H1 (cell line): ENCODE measurements at regions of chr17 and their contacts with region 1.

Region 1: DNA sequence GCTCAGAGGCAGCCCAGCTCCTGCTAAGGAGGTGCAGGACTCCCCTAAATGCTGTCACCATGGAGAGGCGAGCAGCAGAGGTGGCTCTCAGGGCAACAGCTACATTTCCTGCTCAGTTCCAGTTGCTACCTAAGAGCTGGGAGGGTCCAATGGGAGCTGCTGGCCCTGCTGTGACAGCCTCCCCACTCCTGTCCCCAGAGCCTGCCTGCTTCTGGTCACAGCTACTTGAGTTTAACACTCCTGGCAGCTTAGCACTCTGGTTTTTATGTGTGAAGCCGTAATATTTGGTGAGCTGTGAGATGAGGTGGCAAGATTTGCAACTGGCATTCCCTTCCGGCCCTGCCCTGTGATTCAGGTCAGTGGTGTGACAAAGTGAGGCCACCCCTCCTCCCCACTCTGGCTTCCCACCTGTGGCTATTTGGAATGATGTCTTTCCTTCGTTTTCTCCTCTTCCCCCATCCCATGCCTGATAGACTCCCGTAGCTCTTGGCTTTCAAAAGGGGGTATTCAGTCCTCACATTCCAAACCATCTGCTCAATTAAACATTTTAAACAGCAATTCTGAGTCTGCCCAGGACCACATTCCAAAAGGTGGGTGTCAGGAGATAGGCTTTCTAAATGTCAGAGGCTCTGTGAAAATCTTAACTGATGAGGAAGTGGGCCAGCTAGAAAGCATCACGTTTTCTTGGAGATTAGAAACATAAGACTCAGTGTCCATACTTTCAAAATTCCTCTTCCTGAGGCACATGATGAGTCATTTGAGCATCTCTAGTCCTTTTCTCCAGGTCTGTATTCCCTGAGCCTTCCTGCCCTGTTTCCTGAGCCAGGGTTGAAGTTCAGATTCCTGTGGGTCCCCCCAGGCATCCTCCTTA is 42.6 kb upstream of the SKAP1 start:
- DNase-seq: no peak
- H3K4me3 ChIP-seq: no peak overlapping the region
- H3K27ac ChIP-seq: no peak overlapping the region
- H3K4me1 ChIP-seq: peaks cover 4 to 14% (median 12%) of the 10 kb centered on the region in 4 experiments; a peak in 6 of 7 replicates
- H3K27me3 ChIP-seq: 0 out of 7 replicates have a peak, but pooled peaks cover 0 to 2% (median 0%) of the 10 kb centered on the region in 4 experiments
- CTCF ChIP-seq: no peak
- EP300 ChIP-seq: no peak
- POLR2A ChIP-seq: no peak
- RAD21 ChIP-seq: no peak

Region 2: GRCh38 chr17:48457080-48457836 is 15.4 kb before region 1 on chr17:
- CTCF ChIA-PET with region 1: interaction called, 17 read pairs
- POLR2A ChIA-PET with region 1: no interaction called
- DNase-seq: peak in 1 of 2 experiments; percentile 85
- H3K4me3 ChIP-seq: peak overlapping the region in 3 of 4 experiments; percentile 31 to 52 (median 51); a peak in 6 of 8 replicates
- H3K27ac ChIP-seq: no peak overlapping the region
- H3K4me1 ChIP-seq: peaks cover 0 to 12% (median 4%) of the 10 kb centered on the region in 4 experiments; a peak in 5 of 7 replicates
- H3K27me3 ChIP-seq: peaks cover 4 to 12% (median 9%) of the 10 kb centered on the region in 4 experiments
- CTCF ChIP-seq: peak; percentile 85 to 97 (median 96)
- EP300 ChIP-seq: no peak
- POLR2A ChIP-seq: no peak
- RAD21 ChIP-seq: peak; percentile 52 to 75

Region 3: GRCh38 chr17:48483471-48484131 is 11.0 kb after region 1 on chr17:
- CTCF ChIA-PET with region 1: interaction called, 11 read pairs
- POLR2A ChIA-PET with region 1: no interaction called
- DNase-seq: no peak
- H3K4me3 ChIP-seq: no peak overlapping the region
- H3K27ac ChIP-seq: no peak overlapping the region
- H3K4me1 ChIP-seq: peaks cover 0 to 2% (median 0%) of the 10 kb centered on the region in 4 experiments; a peak in 1 of 7 replicates
- H3K27me3 ChIP-seq: peaks cover 0 to 5% (median 2%) of the 10 kb centered on the region in 4 experiments; a peak in 3 of 7 replicates
- CTCF ChIP-seq: no peak
- EP300 ChIP-seq: no peak
- POLR2A ChIP-seq: no peak
- RAD21 ChIP-seq: no peak

Region 4: DNA sequence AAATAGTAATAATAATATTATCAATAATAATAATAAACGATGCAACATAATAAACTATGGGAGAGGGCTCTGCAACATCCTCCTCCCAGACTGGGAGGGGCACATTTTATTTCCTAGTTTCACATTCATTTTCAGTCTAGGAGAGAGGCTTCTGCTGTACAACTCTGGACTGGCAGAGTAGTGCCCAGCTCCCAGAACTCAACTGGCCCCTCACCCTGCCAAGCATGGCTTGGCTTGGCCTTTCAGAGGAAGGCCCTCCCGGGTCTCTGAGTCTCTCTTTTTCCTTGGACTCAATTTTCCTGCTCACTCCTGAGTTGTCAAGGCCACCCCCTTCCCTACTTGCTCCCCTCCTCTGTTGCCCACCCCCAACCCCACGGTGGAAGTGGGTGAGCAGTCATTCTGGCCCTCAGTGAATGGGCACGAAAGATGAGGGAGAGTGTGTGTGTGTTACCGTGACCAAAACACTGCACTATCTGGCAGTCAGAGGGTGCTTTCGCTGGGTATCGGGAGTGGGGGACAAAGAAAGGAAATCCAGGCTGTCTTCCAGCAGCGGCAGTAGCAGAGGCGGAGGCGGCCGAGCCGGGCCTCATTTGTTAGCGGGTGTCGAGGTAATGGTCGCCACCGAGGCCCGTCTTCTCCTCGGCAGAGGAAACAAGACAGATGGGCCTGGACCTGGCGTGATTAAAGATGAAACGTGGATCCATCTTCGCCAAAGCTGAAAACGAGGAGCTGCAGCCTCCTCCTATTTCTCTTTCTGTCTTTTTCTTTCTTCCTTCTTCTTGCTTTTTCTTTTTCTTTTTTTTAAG is 103.2 kb after region 1 on chr17:
- CTCF ChIA-PET with region 1: no interaction called
- POLR2A ChIA-PET with region 1: no interaction called
- DNase-seq: no peak
- H3K4me3 ChIP-seq: no peak overlapping the region
- H3K27ac ChIP-seq: no peak overlapping the region
- H3K4me1 ChIP-seq: peaks cover 0 to 9% (median 3%) of the 10 kb centered on the region in 4 experiments; a peak in 4 of 7 replicates
- H3K27me3 ChIP-seq: peaks cover 99 to 100% (median 100%) of the 10 kb centered on the region in 4 experiments
- CTCF ChIP-seq: no peak
- EP300 ChIP-seq: no peak
- POLR2A ChIP-seq: no peak
- RAD21 ChIP-seq: no peak

Region 5: DNA sequence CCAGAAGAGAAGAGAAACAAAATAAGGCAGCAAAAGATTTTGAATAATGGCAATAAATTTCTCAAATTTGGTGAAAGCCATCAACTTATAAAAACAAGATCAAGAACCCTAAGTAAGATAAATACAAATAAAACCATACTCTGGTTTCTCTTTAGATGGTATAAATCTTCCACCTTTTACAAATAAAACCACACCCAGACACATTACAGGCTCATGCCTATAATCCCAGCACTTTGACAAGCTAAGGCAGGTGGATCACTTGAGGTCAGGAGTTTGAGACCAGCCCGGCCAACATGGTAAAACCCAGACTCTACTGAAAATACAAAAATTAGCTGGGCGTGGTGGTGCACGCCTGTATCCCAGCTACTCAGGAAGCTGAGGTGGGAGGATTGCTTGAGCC is 300.6 kb after region 1 on chr17:
- CTCF ChIA-PET with region 1: no interaction called
- POLR2A ChIA-PET with region 1: no interaction called
- DNase-seq: no peak
- H3K4me3 ChIP-seq: no peak overlapping the region
- H3K27ac ChIP-seq: no peak overlapping the region
- H3K4me1 ChIP-seq: no peaks in the 10 kb centered on the region
- H3K27me3 ChIP-seq: no peaks in the 10 kb centered on the region; a peak in 1 of 7 replicates
- CTCF ChIP-seq: no peak
- EP300 ChIP-seq: no peak
- POLR2A ChIP-seq: no peak
- RAD21 ChIP-seq: no peak